ENCODE measurements at regions of chr10 and their contacts with region 1.

Region 1: DNA sequence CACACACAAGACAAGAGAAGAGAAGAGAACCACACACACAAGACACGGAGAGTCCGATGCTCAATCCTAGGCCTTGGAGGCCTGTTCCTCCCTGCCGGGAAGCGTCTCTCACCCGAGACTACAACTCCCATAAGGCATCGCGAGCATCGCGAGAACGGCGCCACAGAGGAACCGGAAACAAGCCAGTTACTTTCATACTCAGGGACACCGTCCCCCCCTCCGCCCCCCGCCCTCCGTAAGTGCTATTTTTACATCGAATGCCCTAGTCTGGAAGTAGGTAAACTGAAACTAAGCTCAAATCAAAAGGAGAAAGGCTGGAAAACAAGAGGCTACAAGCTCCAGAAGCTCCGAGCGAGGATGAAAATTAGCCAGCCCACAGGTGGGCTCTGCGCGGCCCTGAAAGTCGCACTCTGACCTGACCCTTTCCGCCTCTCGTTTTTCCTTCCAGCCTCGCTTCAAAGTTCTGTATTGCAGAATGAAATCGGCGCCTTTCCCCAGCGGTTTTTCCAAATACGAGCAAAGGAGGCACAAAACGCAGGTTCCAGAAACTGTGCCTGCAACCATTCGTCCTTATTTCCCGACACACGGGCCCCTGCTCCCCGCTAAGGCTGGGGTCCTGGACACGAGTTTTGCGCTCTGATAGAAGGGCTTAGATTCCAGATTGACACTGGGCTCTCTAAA is 11.5 kb upstream of the DNAJC12 start:
- DNase-seq: peak; percentile 90
- ATAC-seq: peak; percentile 95
- H3K4me3 Mint-ChIP-seq: peak overlapping the region; percentile 94
- H3K27ac Mint-ChIP-seq: peak overlapping the region; percentile 96
- H3K4me1 Mint-ChIP-seq: peaks cover 13% of the 10 kb centered on the region
- H3K27me3 Mint-ChIP-seq: no peaks in the 10 kb centered on the region
- CTCF ChIP-seq: no peak

Region 2: DNA sequence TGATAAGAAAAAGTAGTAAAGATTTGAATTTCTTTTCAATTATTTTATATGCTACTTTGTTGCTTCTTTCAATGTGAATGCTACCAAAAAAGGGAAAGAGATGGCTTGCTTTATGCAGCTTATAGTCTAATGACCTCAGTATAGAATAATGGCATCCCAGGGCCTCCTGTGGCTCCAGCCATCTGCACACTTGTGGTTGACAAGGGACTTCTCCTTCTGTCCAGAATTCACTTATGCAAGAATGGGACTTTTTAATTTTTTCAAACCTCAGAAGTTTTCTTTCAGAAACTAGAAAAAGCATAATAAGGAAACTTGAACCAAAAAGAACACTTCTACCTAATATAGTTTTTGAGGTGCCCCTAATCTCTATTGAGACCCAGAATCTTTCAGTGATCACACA is 464.4 kb before region 1 on chr10:
- CTCF ChIA-PET with region 1: no interaction called
- POLR2A ChIA-PET with region 1: no interaction called
- intact Hi-C with region 1: no loop called
- DNase-seq: no peak
- ATAC-seq: no peak
- H3K4me3 Mint-ChIP-seq: no peak overlapping the region
- H3K27ac Mint-ChIP-seq: no peak overlapping the region
- H3K4me1 Mint-ChIP-seq: no peaks in the 10 kb centered on the region
- H3K27me3 Mint-ChIP-seq: peaks cover 3% of the 10 kb centered on the region
- CTCF ChIP-seq: no peak

Region 3: DNA sequence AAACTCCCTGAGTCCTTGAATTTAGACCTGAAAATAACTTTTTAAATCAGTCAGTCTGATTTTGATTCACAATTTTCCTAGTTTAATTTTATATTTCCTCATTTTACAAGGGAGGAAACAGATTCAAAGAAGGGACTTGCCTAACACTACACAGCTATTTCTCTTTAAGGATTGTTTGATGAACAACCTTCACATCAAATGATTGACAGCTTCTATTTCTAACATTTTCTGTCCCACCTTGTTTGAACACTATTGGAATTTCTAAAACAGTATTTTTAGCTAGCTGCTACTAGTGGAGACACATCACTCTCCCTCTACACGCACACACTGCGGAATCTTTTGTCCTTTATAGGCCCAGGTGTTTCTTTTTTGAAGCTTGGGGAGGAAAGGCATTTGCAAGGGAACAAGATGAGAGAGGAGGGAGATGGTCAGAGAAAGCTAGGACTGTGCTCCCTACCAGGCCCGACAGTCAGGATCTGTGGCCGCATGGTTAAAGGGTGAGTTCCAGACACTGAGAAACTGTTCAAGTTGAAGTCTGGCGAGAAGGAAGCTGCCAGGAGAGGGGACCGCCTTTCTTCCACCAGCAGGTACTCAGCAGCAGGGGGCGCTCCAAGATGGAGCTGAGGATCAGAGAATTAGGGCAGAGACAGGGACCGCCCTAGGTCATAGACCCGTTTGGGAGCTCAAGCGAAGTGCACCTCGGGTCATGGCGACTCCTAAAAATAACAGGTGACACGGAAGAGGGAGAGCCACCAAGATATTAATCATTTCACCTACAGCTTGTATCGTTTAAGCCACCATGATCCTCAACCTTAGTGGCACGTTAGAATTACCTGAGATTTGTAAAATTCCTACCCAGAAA is 61.2 kb before region 1 on chr10:
- CTCF ChIA-PET with region 1: interaction called, 10 read pairs
- POLR2A ChIA-PET with region 1: interaction called, 4 read pairs
- intact Hi-C with region 1: loop called (anchors 1 kb)
- DNase-seq: peak; percentile 58
- ATAC-seq: peak; percentile 80
- H3K4me3 Mint-ChIP-seq: peak overlapping the region; percentile 52
- H3K27ac Mint-ChIP-seq: no peak overlapping the region
- H3K4me1 Mint-ChIP-seq: peaks cover 23% of the 10 kb centered on the region
- H3K27me3 Mint-ChIP-seq: no peaks in the 10 kb centered on the region
- CTCF ChIP-seq: no peak

Region 4: DNA sequence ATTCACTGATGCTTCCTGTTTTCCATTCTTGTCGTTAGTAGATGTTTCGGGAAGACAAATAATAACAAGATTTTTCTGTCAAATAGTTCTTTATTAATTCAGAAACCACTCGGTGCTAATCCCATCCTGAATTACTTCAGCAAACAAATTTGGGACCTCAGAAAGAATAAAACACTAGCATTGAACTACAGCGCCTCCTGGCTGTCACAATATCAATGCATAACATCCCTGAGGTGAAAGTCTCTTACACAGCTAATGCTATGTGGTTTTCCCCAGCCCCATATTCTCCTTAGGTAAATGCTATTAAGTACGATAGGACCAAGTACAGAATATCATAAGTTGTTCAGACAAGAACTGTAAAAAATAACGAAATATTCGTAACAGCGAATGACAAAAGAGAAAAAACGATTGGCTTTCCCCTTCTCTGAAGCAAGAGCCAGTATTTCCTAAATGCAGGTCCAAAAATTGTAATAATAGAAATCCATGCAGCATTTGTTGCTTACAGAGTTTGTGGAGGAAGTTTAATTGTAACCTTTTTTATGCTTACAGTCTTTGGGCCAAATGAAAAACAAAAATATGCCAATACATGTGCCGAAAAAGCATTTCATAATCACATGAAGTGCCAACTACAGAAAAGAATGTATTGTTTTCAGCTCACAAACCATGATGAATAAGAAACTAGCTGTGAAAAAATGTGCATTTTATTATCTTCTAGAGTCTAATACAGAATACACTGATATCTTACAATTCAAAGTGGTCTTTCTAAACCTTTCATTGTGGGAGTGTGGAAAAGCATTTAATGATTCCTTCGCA is 307.1 kb after region 1 on chr10:
- CTCF ChIA-PET with region 1: interaction called, 118 read pairs
- POLR2A ChIA-PET with region 1: no interaction called
- intact Hi-C with region 1: no loop called
- DNase-seq: no peak
- ATAC-seq: peak; percentile 61
- H3K4me3 Mint-ChIP-seq: no peak overlapping the region
- H3K27ac Mint-ChIP-seq: no peak overlapping the region
- H3K4me1 Mint-ChIP-seq: no peaks in the 10 kb centered on the region
- H3K27me3 Mint-ChIP-seq: peaks cover 5% of the 10 kb centered on the region
- CTCF ChIP-seq: no peak

Region 5: DNA sequence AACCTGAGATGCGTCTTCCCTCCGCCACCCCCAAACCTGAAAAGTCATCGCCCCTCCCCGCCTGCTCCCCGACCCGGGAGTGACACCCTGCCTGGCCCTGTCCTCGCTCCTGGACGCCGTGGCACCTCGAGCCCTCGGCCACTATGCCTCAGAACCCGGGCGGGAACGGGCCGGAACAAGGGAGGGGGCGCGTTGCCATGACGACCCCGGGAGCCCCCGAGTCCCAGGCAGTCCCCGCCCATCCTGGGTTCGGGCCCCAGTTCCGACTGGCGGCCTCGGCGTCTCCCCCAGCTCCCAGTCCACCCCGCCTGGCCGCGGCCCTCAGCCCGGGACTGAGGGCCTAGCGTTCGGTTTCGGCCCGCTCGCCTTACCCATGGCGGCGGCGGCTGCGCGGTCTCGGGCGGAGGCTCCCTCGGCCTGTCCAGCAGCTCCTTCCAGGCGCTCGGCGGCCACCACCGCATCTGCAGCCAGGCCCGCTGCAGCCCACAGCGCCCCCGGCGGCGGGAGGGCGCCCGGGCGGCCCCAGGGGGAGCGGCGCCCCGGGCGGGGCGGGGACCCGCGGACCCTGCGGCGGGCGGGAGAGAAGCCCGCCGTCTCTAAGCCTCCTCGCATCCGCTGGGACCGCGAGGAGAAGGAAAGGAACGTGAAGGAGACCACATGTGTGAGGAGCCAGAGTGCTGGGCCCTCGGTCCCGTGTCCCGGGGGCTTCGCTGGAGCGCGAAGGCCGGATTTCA is 557.5 kb after region 1 on chr10 and contains the start of gene RUFY2:
- CTCF ChIA-PET with region 1: no interaction called
- POLR2A ChIA-PET with region 1: no interaction called
- intact Hi-C with region 1: loop called (anchors 1 kb)
- DNase-seq: peak; percentile 91
- ATAC-seq: peak; percentile 92
- H3K4me3 Mint-ChIP-seq: peak within 1 kb of the TSS; percentile 92
- H3K27ac Mint-ChIP-seq: peak within 1 kb of the TSS; percentile 85
- H3K4me1 Mint-ChIP-seq: peaks cover 15% of the 10 kb centered on the region
- H3K27me3 Mint-ChIP-seq: no peaks in the 10 kb centered on the region
- CTCF ChIP-seq: no peak
- total RNA-seq, gene RUFY2: 23.1 and 28.5 TPM in 2 replicates

Region 6: DNA sequence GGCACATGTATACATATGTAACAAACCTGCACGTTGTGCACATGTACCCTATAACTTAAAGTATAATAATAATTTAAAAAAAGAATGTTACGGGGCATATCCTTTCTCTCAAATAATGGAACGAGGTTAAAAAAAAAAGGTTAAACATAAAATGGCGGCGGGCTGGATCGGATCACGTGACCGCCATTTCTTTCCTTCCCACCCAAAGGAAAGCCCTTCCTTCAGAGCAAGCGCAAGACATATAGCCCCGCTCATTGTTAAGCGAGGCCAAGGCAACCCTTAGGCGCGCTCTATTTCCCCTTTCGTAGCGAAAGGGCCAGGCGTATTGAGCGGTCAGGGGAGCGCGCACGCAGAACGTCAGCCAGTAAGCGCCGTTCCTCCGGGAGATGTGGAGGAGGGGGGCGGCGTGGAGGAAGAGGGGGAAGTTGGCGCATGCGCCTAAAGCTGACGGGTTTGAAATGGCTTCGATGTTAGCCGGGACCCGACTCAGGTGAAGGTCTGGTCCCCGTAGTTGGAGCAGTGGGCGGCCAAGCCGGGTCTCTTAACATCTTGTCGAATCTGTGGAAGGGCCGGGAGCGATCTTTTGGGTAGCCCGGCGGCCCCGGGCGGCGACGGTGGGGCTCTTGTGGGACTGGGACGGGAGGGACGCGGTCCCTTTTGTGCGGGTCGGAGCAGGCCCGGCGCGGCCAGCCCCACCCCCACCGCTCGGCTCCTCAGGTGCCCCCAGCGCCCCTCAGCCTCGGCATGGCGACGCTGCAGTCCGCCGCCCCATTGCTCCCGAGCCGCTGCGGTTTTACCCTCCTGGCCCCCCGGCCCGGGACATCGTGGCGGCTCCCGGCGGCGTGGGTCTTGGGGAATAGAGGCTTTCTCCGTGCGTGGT is 871.6 kb after region 1 on chr10 and contains the start of gene CCAR1:
- CTCF ChIA-PET with region 1: no interaction called
- POLR2A ChIA-PET with region 1: no interaction called
- intact Hi-C with region 1: loop called (anchors 1 kb)
- DNase-seq: peak; percentile 93
- ATAC-seq: peak; percentile 98
- H3K4me3 Mint-ChIP-seq: peak within 1 kb of the TSS; percentile 92
- H3K27ac Mint-ChIP-seq: peak within 1 kb of the TSS; percentile 98
- H3K4me1 Mint-ChIP-seq: peaks cover 14% of the 10 kb centered on the region
- H3K27me3 Mint-ChIP-seq: no peaks in the 10 kb centered on the region
- CTCF ChIP-seq: no peak
- total RNA-seq, gene CCAR1: 88.2 and 98.8 TPM in 2 replicates